ENCODE measurements at regions of chr3 and their contacts with region 1.

Region 1: DNA sequence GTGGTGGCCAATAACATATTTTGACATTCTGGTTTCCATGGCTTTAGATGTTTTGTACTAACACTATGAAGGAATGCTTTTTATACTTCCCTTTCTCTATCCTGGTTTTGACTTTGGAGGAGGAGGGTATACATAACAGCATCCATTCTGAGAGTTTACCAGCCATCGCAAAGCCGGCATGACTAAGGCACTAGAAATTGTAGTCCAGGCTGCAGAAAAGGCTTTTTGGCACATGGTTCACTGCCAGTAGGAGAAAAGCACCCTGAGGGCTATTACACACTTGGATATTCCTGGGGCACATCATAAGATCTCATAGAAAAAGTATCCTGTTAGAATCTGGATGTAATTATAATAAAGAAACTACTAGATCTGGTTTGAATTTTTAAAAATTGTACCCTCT is 101.8 kb downstream of the STT3B start:
- DNase-seq: no peak
- ATAC-seq: no peak
- H3K4me3 ChIP-seq: no peak overlapping the region
- H3K4me3 Mint-ChIP-seq: no peak overlapping the region
- H3K27ac ChIP-seq: no peak overlapping the region
- H3K27ac Mint-ChIP-seq: peak overlapping the region in 8 of 9 donors; percentile 28 to 86 (median 62)
- H3K4me1 ChIP-seq: peaks cover 10 to 28% of the 10 kb centered on the region in 2 donors
- H3K4me1 Mint-ChIP-seq: peaks cover 17 to 72% (median 61%) of the 10 kb centered on the region in 7 donors
- H3K27me3 ChIP-seq: no peaks in the 10 kb centered on the region
- H3K27me3 Mint-ChIP-seq: no peaks in the 10 kb centered on the region

Region 2: GRCh38 chr3:31219131-31219843 is 415.2 kb before region 1 on chr3:
- CTCF ChIA-PET with region 1: no interaction called
- POLR2A ChIA-PET with region 1: interaction called, 3 read pairs
- intact Hi-C with region 1: loop called in 1 of 2 experiments (anchors 10 kb)
- DNase-seq: no peak
- ATAC-seq: peak; percentile 44
- H3K4me3 ChIP-seq: no peak overlapping the region
- H3K4me3 Mint-ChIP-seq: peak overlapping the region in 6 of 10 donors; percentile 2 to 54 (median 30)
- H3K27ac ChIP-seq: no peak overlapping the region
- H3K27ac Mint-ChIP-seq: peak overlapping the region in 4 of 9 donors; percentile 26 to 52 (median 42)
- H3K4me1 ChIP-seq: peaks cover 50 to 66% of the 10 kb centered on the region in 2 donors
- H3K4me1 Mint-ChIP-seq: peaks cover 64 to 98% (median 96%) of the 10 kb centered on the region in 7 donors
- H3K27me3 ChIP-seq: no peaks in the 10 kb centered on the region
- H3K27me3 Mint-ChIP-seq: peaks cover 0 to 2% (median 0%) of the 10 kb centered on the region in 5 donors

Region 3: DNA sequence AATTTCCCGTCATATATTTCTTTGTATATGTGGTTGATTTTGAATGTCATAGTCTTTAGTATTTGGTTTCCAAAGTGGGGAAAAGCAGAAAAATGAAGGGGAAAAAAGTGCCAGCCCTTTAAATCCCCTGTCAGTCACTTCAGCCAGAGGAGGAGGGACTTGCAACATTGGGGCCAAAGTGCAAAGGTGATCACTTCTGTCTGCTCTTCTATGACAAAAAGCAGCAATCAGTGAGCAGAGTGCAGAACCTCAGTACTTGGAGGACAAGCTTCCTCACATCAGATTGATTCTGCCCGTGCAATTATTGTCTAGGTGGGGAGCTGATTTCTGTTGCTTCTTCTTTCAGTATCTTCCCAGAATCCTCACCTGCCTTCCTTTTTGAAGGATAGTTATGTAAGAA is 41.7 kb before region 1 on chr3:
- CTCF ChIA-PET with region 1: no interaction called
- POLR2A ChIA-PET with region 1: no interaction called
- intact Hi-C with region 1: loop called in 1 of 2 experiments (anchors 5 kb)
- DNase-seq: no peak
- ATAC-seq: no peak
- H3K4me3 ChIP-seq: no peak overlapping the region
- H3K4me3 Mint-ChIP-seq: peak overlapping the region in 5 of 10 donors; percentile 40 to 67 (median 50)
- H3K27ac ChIP-seq: no peak overlapping the region
- H3K27ac Mint-ChIP-seq: peak overlapping the region in 1 of 9 donors; percentile 67
- H3K4me1 ChIP-seq: peaks cover 0 to 4% of the 10 kb centered on the region in 2 donors
- H3K4me1 Mint-ChIP-seq: peaks cover 34 to 70% (median 52%) of the 10 kb centered on the region in 7 donors
- H3K27me3 ChIP-seq: no peaks in the 10 kb centered on the region
- H3K27me3 Mint-ChIP-seq: no peaks in the 10 kb centered on the region

Region 4: GRCh38 chr3:31620656-31621055 is 13.8 kb before region 1 on chr3:
- CTCF ChIA-PET with region 1: no interaction called
- POLR2A ChIA-PET with region 1: no interaction called
- intact Hi-C with region 1: loop called in 1 of 2 experiments (anchors 2 kb)
- DNase-seq: no peak
- ATAC-seq: no peak
- H3K4me3 ChIP-seq: no peak overlapping the region
- H3K4me3 Mint-ChIP-seq: no peak overlapping the region
- H3K27ac ChIP-seq: no peak overlapping the region
- H3K27ac Mint-ChIP-seq: peak overlapping the region in 3 of 9 donors; percentile 52 to 65 (median 61)
- H3K4me1 ChIP-seq: no peaks in the 10 kb centered on the region
- H3K4me1 Mint-ChIP-seq: peaks cover 13 to 36% (median 26%) of the 10 kb centered on the region in 7 donors
- H3K27me3 ChIP-seq: no peaks in the 10 kb centered on the region
- H3K27me3 Mint-ChIP-seq: no peaks in the 10 kb centered on the region

Region 5: DNA sequence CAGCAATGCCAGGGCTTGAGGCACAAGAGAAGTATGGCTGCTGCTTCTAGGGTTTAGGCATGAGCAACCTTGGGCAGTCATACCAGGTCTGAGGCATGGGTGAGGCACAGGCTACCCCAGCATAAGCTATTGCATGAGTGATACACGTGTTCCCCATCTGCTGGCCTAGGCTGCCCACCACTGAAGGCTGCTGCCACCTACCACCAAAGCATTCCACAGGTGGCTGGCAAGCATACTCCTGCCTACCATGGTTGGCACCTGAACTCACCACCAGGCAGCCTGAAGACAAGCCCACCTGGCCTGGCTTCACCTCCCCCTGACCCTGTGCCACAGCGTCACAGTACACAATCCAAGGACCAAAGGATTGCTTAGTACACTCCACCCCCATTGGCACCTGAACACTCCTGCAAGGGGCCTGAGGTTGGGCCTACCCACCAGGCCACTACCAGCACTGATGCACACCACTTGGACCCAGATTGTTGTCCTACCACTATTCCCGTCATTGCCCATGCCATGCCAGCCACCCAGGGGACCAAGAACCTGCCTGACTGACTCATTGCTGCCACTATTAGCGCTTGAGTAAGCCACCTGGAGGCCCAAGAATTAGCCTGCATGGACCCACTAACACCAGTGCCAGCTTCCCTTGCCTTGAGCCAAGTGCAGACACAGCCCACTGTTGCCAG is 13.9 kb after region 1 on chr3:
- CTCF ChIA-PET with region 1: no interaction called
- POLR2A ChIA-PET with region 1: no interaction called
- intact Hi-C with region 1: loop called in 1 of 2 experiments (anchors 2 kb)
- DNase-seq: no peak
- ATAC-seq: peak; percentile 18
- H3K4me3 ChIP-seq: no peak overlapping the region
- H3K4me3 Mint-ChIP-seq: peak overlapping the region in 2 of 10 donors; percentile 14 to 40
- H3K27ac ChIP-seq: no peak overlapping the region
- H3K27ac Mint-ChIP-seq: peak overlapping the region in 2 of 9 donors; percentile 31 to 69
- H3K4me1 ChIP-seq: no peaks in the 10 kb centered on the region
- H3K4me1 Mint-ChIP-seq: peaks cover 0 to 3% (median 0%) of the 10 kb centered on the region in 7 donors
- H3K27me3 ChIP-seq: no peaks in the 10 kb centered on the region
- H3K27me3 Mint-ChIP-seq: no peaks in the 10 kb centered on the region

Region 6: DNA sequence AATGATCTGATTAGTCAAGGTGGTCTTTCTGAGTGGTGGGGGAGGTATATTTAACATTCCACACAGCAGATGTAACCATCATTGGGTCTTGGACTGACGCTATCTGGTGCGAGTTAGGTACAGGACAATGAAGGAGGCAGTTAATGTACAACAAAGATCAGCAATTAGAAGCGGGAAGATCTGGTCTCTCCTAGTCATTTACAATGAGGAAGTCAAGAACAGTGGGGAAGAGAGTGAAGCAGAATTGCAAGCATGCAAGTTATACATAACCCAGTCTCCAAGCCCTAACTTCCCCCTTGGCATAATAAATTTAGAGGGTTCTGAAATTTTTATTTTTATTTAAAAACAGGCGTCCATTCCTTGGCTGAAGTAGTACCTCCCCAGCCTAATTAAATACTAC is 486.0 kb after region 1 on chr3:
- CTCF ChIA-PET with region 1: no interaction called
- POLR2A ChIA-PET with region 1: no interaction called
- intact Hi-C with region 1: loop called in 1 of 2 experiments (anchors 10 kb)
- DNase-seq: no peak
- ATAC-seq: peak; percentile 67
- H3K4me3 ChIP-seq: no peak overlapping the region
- H3K4me3 Mint-ChIP-seq: no peak overlapping the region
- H3K27ac ChIP-seq: no peak overlapping the region
- H3K27ac Mint-ChIP-seq: no peak overlapping the region
- H3K4me1 ChIP-seq: peaks cover 4 to 23% of the 10 kb centered on the region in 2 donors
- H3K4me1 Mint-ChIP-seq: peaks cover 21 to 62% (median 53%) of the 10 kb centered on the region in 7 donors
- H3K27me3 ChIP-seq: no peaks in the 10 kb centered on the region
- H3K27me3 Mint-ChIP-seq: no peaks in the 10 kb centered on the region

Region 7: DNA sequence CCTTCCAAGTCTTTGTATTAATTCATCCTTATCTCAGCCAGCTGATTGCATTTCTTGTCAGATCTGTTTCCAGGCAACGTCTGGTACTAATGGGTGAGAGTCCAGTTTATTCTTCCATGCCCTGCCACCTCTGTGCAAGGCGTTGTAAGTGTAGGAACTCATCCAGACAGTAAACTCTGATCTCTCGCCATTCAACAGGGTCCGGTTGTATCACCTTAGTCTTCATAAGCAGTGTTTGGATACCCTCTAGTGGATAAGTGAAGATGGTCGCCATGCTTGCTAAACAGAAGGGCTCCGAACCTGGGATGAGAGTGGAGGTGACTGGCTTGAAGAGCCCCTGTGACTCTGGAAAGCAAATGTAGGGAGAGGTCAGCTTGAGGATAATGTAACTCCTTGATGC is 705.6 kb after region 1 on chr3:
- CTCF ChIA-PET with region 1: no interaction called
- POLR2A ChIA-PET with region 1: no interaction called
- intact Hi-C with region 1: no loop called
- DNase-seq: peak in 7 of 9 donors; percentile 31 to 65 (median 56)
- ATAC-seq: peak; percentile 77
- H3K4me3 ChIP-seq: no peak overlapping the region
- H3K4me3 Mint-ChIP-seq: no peak overlapping the region
- H3K27ac ChIP-seq: no peak overlapping the region
- H3K27ac Mint-ChIP-seq: no peak overlapping the region
- H3K4me1 ChIP-seq: peaks cover 0 to 18% of the 10 kb centered on the region in 2 donors
- H3K4me1 Mint-ChIP-seq: peaks cover 18 to 30% (median 27%) of the 10 kb centered on the region in 7 donors
- H3K27me3 ChIP-seq: no peaks in the 10 kb centered on the region
- H3K27me3 Mint-ChIP-seq: no peaks in the 10 kb centered on the region